Vagina (tissue), 2 donors: ENCODE measurements at regions of chr3 and their contacts with region 1.

Region 1: DNA sequence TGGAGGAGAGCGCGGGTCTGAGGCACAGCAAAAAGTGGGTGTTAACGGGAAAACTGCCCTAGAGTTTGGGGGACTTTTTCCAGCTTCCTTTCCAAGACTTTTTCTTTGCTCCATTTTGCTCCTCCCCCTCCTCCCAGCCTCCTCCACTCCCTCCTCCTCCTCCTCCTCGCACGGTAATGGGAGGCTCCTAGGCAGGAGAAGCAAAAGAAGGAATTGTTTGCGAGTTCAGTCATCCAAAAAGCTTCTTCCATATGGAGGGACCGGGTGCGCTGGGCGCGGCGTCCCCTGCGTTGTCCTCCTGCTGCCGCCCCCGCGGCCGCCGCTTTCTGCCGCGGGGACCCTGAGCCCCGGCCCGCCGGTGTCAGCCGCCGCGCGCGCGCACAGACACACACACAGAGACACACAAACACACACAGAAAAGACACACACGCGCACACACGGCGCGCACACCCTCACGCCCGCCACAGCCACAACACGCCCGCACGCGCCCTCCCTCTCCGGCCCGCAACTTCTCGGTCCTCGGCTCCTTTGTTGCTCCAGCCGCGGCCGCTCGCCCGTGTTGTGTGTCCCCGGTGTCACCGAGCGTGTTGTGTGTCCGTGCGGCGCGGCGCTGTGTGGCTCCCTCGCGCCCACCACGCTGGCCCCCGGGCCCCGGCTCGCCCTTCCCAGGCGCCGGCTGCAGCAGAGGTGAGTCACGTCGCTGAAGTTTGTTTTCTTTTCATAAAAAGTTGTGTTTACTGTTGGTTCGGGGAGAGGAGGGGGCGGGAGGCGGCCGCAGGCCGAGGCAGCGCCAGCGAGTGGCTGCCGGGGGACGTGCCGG is at the start of gene BOC:
- DNase-seq: no peak
- H3K4me3 ChIP-seq: peak within 1 kb of the TSS; percentile 90 to 94
- H3K27ac ChIP-seq: peak within 1 kb of the TSS; percentile 98
- H3K4me1 ChIP-seq: peaks cover 30% of the 10 kb centered on the region
- H3K27me3 ChIP-seq: no peaks in the 10 kb centered on the region
- CTCF ChIP-seq: no peak
- POLR2A ChIP-seq: peak in 1 of 2 donors; percentile 70
- total RNA-seq, gene BOC: 93.1 TPM

Region 2: GRCh38 chr3:112786002-112786590 is 425.4 kb before region 1 on chr3:
- intact Hi-C with region 1: no loop called
- DNase-seq: no peak
- H3K4me3 ChIP-seq: no peak overlapping the region
- H3K27ac ChIP-seq: no peak overlapping the region
- H3K4me1 ChIP-seq: peaks cover 9% of the 10 kb centered on the region
- H3K27me3 ChIP-seq: no peaks in the 10 kb centered on the region
- CTCF ChIP-seq: no peak
- POLR2A ChIP-seq: no peak

Region 3: DNA sequence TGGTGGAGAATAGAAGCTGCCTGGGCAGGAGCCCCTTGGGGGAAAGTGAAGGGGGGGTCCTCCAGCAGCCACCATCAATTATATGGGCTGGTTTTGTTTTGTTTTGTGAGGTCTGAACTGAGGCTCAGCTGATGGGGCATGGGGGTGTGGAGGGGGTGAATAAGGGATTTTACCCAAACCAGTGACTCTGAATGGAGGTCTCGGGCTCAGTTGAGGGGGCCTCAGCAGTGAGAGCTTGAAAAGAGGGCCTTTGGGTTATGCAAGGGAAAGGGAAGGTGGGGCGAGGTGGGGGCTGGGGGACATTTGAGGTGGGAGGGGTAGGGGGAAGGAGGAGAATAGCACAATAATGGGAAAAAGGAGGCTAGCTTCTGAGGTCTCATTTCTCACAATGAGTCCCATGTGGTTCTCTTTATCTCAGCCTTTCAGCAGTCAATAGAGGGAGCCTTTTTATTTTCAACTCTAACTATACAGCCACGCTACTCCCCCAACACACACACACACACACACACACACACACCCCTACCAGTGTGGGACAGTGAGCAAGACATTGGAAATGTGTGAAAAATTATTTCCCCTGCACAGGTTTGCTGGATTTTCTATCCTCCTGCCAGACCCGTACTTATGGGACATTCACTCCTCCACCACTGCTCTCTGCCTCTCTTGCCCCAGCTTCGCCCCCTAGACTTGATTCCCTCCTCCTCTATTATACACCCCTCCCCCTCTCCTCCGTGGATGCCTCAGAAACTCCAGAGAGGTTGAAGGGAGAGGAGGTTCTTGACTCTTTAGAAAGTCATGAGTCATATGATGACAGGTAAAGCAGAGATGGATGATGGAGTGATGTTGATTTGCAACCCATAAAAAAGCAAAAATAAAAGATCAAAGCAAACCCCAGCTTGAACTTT is 124.7 kb before region 1 on chr3:
- intact Hi-C with region 1: no loop called
- DNase-seq: no peak
- H3K4me3 ChIP-seq: no peak overlapping the region
- H3K27ac ChIP-seq: no peak overlapping the region
- H3K4me1 ChIP-seq: no peaks in the 10 kb centered on the region
- H3K27me3 ChIP-seq: no peaks in the 10 kb centered on the region
- CTCF ChIP-seq: no peak
- POLR2A ChIP-seq: no peak

Region 4: GRCh38 chr3:113166719-113167492 is 44.6 kb before region 1 on chr3:
- intact Hi-C with region 1: loop called (anchors 5 kb)
- DNase-seq: no peak
- H3K4me3 ChIP-seq: no peak overlapping the region
- H3K27ac ChIP-seq: peak overlapping the region; percentile 54
- H3K4me1 ChIP-seq: peaks cover 30% of the 10 kb centered on the region
- H3K27me3 ChIP-seq: no peaks in the 10 kb centered on the region
- CTCF ChIP-seq: no peak
- POLR2A ChIP-seq: no peak

Region 5: DNA sequence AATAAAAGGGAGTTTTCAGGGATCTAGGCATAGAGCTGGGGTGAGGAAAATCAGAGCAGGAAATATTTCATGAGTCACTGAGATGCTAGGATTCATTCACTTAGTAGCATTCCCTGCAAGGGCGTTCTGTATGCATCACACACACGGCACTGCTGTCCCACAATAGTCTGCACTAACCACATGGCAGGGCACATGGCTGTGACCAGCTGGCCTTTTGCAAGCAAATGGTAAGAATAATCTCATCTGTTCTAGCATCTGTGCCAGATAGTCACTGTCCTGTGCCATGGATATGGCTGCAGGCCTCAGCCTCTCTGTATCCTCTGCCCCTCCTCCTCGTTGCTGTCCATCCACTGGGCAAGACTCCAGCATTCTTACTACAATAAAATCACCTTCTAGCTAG is 37.6 kb after region 1 on chr3:
- intact Hi-C with region 1: loop called (anchors 2 kb)
- DNase-seq: no peak
- H3K4me3 ChIP-seq: no peak overlapping the region
- H3K27ac ChIP-seq: peak overlapping the region; percentile 77
- H3K4me1 ChIP-seq: peaks cover 64% of the 10 kb centered on the region
- H3K27me3 ChIP-seq: no peaks in the 10 kb centered on the region
- CTCF ChIP-seq: no peak
- POLR2A ChIP-seq: no peak

Region 6: DNA sequence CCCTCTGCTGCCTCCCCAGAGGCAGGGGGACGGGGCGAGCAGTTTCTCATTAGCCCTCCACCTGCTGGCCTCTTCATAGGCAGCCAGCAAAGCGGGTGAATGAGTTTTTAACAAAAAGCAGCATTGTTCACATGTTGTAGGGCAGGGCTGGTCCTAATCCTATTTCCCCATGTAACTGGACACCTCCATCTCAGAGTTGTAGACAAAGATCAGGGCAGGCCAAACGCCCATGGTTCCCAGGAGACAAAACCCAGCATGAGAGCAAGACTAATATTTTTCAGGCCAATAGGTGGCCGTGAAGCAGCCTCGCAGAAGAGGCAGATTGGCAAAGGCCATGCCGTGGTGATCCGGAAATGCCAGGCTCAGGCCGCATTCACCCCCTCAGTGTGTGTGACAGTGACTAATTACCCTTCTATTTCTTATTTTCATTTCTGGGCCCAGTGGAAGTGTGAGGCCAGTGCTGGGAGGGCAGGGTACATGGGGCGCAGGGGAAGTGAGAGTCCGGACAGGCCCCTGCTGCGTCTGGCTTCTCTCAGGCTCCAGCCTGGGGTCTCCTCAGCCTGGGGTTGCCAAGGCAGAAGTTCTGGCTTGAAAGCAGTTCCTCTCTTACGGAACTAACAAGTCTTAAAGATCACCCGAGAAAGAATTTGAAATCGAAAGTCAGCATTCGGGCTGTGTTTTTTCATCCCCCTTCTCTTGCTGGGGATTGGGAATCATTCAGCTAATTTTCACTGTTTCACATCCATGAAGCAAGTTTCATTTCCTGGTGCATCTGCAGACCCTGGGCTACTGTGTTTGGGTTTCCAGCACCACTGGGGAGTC is 64.6 kb after region 1 on chr3:
- intact Hi-C with region 1: loop called (anchors 5 kb)
- DNase-seq: no peak
- H3K4me3 ChIP-seq: peak overlapping the region; percentile 24 to 39
- H3K27ac ChIP-seq: peak overlapping the region; percentile 83
- H3K4me1 ChIP-seq: peaks cover 22% of the 10 kb centered on the region
- H3K27me3 ChIP-seq: no peaks in the 10 kb centered on the region
- CTCF ChIP-seq: peak in 1 of 3 experiments; percentile 14
- POLR2A ChIP-seq: no peak